K562 (cell line): ENCODE measurements at regions of chr2 and their contacts with region 1.

Region 1: GRCh38 chr2:207625018-207625907 is at the start of gene METTL21A:
- DNase-seq: peak; percentile 87 to 94 (median 92)
- ATAC-seq: peak; percentile 85
- H3K4me3 ChIP-seq: peak within 1 kb of the TSS; percentile 86
- H3K27ac ChIP-seq: peak within 1 kb of the TSS; percentile 96
- H3K4me1 ChIP-seq: peaks cover 0 to 24% of the 10 kb centered on the region in 2 experiments; a peak in 2 of 5 replicates
- H3K27me3 ChIP-seq: no peaks in the 10 kb centered on the region
- CTCF ChIP-seq: peak; percentile 53 to 54 (median 54)
- EP300 ChIP-seq: 0 out of 2 replicates have a peak, but pooled peaks have one; percentile 11
- POLR2A ChIP-seq: peak; percentile 81
- RAD21 ChIP-seq: no peak
- polyA plus RNA-seq, gene METTL21A: 9.1 to 9.9 TPM

Region 2: DNA sequence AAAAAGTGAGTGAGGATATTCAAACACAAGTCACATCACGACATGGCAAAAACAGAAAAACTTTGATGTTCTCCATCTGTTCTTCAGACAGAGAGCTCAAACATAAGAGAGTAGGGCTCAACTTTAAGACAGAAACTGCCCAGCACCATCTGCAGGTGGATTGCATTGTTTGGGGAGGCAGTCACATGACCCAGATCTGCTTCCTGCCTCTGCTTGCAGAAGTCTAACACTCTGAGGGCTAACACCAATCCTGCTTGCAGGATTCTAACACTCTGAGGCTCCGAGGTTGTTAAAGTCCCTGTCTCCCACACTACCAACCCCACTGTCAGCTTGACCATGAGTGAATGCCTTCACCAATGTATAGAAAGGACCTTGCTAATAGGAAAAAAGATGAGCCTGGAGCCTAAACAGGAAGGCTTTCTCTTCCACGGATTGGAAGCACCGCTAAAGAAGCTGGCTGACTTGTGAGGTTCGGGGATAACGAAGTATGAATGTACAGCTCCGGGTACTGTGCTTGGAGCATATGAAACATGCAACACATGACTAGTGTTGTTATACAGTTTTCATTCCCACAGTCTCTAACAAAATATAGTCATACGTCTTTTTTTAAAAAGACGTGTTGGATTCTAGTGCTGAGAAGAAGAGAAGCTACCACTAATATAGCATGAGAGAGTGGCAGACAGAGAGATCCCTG is 272.1 kb before region 1 on chr2:
- CTCF ChIA-PET with region 1: no interaction called
- POLR2A ChIA-PET with region 1: no interaction called
- in situ Hi-C with region 1: no loop called
- intact Hi-C with region 1: no loop called
- DNase-seq: peak in 3 of 4 experiments; percentile 14 to 29 (median 15)
- ATAC-seq: peak; percentile 80
- H3K4me3 ChIP-seq: no peak overlapping the region
- H3K27ac ChIP-seq: no peak overlapping the region
- H3K4me1 ChIP-seq: no peaks in the 10 kb centered on the region; a peak in 2 of 5 replicates
- H3K27me3 ChIP-seq: no peaks in the 10 kb centered on the region; a peak in 1 of 5 replicates
- CTCF ChIP-seq: no peak
- EP300 ChIP-seq: no peak
- POLR2A ChIP-seq: no peak
- RAD21 ChIP-seq: peak; percentile 7 to 50; a peak in 2 of 4 replicates

Region 3: DNA sequence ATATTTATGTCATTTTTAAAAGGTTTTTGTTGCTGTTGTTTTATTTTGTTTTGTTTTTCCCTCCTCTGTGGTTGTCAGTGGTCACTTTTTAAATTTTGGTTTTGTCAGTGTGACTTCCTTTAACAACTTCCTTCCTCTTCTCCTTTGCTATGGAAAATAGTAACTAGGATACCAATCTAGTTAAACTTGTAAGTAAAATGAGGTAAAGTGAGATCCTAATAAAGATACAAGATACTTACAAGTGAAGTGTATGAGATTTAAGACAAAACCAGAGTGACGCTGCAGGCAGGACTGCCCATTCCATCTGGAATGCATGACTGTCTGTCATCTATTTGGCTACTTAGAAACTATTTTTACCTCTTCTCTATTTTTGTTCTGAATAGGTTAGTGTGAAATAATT is 126.1 kb before region 1 on chr2:
- CTCF ChIA-PET with region 1: no interaction called
- POLR2A ChIA-PET with region 1: no interaction called
- in situ Hi-C with region 1: no loop called
- intact Hi-C with region 1: loop called (anchors 10 kb)
- DNase-seq: no peak
- ATAC-seq: no peak
- H3K4me3 ChIP-seq: no peak overlapping the region
- H3K27ac ChIP-seq: no peak overlapping the region
- H3K4me1 ChIP-seq: peaks cover 5 to 17% of the 10 kb centered on the region in 2 experiments; a peak in 3 of 5 replicates
- H3K27me3 ChIP-seq: no peaks in the 10 kb centered on the region
- CTCF ChIP-seq: no peak
- EP300 ChIP-seq: no peak
- POLR2A ChIP-seq: no peak
- RAD21 ChIP-seq: no peak

Region 4: GRCh38 chr2:207529330-207530159 is 95.7 kb before region 1 on chr2 and contains the start of gene CREB1:
- CTCF ChIA-PET with region 1: no interaction called
- POLR2A ChIA-PET with region 1: interaction called, 4 read pairs
- in situ Hi-C with region 1: no loop called
- intact Hi-C with region 1: loop called (anchors 2 kb)
- DNase-seq: peak; percentile 89 to 95 (median 91)
- ATAC-seq: peak; percentile 90
- H3K4me3 ChIP-seq: peak within 1 kb of the TSS; percentile 74
- H3K27ac ChIP-seq: peak within 1 kb of the TSS; percentile 93
- H3K4me1 ChIP-seq: peaks cover 10 to 14% of the 10 kb centered on the region in 2 experiments; a peak in 4 of 5 replicates
- H3K27me3 ChIP-seq: no peaks in the 10 kb centered on the region
- CTCF ChIP-seq: peak in 1 of 3 experiments; percentile 17; a peak in 2 of 6 replicates
- EP300 ChIP-seq: no peak
- POLR2A ChIP-seq: peak; percentile 92
- RAD21 ChIP-seq: no peak
- polyA plus RNA-seq, gene CREB1: 8.9 to 14.7 TPM

Region 5: DNA sequence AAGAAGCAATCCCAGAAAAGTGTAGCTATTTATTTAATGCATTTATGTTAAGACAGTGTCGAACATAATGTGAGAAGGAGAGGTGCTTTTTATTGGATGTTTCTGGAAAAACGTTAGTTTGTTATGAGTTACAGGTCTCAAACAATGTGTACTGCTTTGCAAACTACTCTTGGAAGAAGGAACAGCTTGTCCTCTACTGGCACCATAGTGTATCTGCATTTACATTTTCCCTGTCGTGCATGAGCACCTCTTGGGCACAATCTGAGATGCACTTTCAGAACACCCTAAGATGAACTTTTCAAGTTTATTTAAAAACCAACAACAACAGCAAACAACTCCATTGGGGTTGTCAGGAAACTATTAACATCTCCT is 109.0 kb after region 1 on chr2:
- CTCF ChIA-PET with region 1: interaction called, 12 read pairs
- POLR2A ChIA-PET with region 1: no interaction called
- in situ Hi-C with region 1: no loop called
- intact Hi-C with region 1: loop called (anchors 2 kb)
- DNase-seq: peak in 1 of 4 experiments; percentile 25
- ATAC-seq: peak; percentile 75
- H3K4me3 ChIP-seq: no peak overlapping the region
- H3K27ac ChIP-seq: no peak overlapping the region
- H3K4me1 ChIP-seq: no peaks in the 10 kb centered on the region
- H3K27me3 ChIP-seq: no peaks in the 10 kb centered on the region
- CTCF ChIP-seq: peak; percentile 34 to 60 (median 39); a peak in 5 of 6 replicates
- EP300 ChIP-seq: no peak
- POLR2A ChIP-seq: no peak
- RAD21 ChIP-seq: peak; percentile 63 to 71

Region 6: DNA sequence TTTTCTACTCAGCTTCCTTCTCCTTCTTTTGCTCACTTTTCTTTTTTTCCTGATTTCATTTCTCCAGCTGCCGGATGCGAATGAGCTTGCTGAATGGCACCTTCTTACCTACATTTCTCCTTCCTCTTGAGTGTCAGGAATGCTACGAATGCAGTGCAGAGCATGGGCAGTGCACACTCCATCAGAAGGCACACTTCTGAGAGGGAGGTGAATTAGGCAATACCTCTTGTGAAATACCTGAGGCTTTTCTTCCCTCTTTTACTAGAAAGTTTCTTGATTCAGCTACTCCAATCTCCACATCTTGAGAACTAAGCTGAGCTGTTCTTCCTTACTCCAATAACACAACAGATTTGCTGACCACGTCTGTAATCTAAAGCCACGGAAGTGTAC is 348.9 kb after region 1 on chr2:
- CTCF ChIA-PET with region 1: no interaction called
- POLR2A ChIA-PET with region 1: no interaction called
- in situ Hi-C with region 1: no loop called
- intact Hi-C with region 1: loop called (anchors 5 kb)
- DNase-seq: no peak
- ATAC-seq: no peak
- H3K4me3 ChIP-seq: no peak overlapping the region
- H3K27ac ChIP-seq: no peak overlapping the region
- H3K4me1 ChIP-seq: peaks cover 0 to 2% of the 10 kb centered on the region in 2 experiments; a peak in 1 of 5 replicates
- H3K27me3 ChIP-seq: no peaks in the 10 kb centered on the region
- CTCF ChIP-seq: no peak
- EP300 ChIP-seq: no peak
- POLR2A ChIP-seq: no peak
- RAD21 ChIP-seq: no peak

Region 7: DNA sequence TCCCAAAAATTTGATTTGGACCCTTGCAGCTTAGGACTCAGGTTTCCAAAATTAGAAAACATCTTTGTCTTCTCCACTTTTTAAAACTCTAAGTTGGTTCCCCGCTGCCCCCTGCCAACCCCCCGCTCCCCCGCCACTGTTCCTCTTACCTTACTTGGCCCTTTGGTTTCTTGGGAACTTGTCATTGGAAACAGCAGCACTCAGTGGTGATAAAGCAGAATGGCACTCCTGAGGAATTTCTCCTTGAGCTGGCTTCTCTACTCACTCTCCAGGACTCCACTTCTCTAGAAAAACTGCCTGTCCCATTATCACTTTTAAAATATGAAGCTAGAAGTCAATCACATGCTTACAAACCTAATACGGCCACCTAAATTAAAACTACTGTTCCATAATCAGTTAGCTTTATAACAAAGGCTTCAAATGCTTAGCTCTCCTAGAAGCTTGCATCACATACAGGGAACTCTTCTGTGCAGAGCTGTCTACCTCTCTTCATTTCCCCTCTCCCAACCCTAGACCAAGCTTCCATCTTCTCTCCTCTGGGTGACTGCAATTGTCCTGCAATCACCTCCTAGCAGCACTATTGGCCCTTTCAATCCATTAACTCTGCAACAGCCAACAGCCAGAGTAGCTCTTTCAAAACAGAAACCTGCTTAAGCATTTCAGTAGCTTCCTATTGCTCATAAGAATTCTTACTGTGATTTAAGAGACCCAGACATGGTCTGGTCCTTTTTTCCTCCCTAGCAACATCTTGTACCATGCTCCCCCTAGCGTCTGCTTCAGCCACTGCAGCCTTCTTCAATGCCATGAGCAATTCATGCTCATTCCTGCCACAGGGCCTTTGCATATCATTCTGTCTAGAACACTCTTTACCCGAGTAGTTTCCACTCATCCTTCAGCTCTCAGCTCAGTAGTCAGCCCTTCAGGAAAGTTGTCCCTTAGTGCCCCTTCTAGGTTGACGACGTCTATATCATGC is 415.2 kb after region 1 on chr2:
- CTCF ChIA-PET with region 1: no interaction called
- POLR2A ChIA-PET with region 1: no interaction called
- in situ Hi-C with region 1: no loop called
- intact Hi-C with region 1: loop called (anchors 5 kb)
- DNase-seq: peak; percentile 41 to 72 (median 54)
- ATAC-seq: peak; percentile 86
- H3K4me3 ChIP-seq: no peak overlapping the region
- H3K27ac ChIP-seq: no peak overlapping the region
- H3K4me1 ChIP-seq: no peaks in the 10 kb centered on the region
- H3K27me3 ChIP-seq: no peaks in the 10 kb centered on the region
- CTCF ChIP-seq: peak; percentile 69 to 79 (median 71)
- EP300 ChIP-seq: no peak
- POLR2A ChIP-seq: no peak
- RAD21 ChIP-seq: peak; percentile 11 to 55; a peak in 2 of 4 replicates